Sciatic nerve (tissue), 2 donors: ENCODE measurements at regions of chr5 and their contacts with region 1.

Region 1: DNA sequence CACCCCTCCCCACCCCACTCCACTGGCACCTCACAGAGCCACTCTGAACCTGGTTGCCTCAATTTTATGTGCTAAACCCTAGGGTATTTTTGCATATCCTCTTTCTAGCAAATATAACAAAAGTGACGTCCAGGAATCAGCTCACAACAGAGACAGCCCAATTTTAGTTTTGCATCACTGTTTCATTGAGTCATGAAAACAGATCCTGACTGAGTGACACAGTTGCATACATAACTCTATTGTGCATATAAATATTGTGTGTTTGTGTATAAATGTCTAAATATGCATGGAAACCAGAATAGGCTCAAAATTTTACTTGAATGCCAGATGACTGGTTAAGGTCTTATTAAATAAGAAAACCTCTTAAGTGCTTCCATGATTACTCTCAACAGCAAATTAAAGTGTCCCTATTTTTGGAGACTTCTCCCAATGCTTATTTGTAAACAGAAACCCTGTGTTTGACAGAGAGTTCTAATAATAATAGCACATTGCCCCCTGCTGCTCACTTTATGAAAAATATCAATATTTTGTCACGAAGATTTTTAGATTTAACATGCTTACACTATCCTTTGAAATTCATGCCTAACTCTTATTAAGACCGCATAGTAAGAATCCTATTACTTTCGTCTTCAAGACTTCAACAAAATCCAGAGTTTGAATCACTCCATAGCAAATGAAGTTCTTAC is 75.5 kb upstream of the PRRC1 start:
- DNase-seq: no peak
- ATAC-seq: no peak

Region 2: GRCh38 chr5:127088251-127089010 is 353.5 kb before region 1 on chr5:
- intact Hi-C with region 1: no loop called
- DNase-seq: no peak
- ATAC-seq: peak; percentile 20

Region 3: DNA sequence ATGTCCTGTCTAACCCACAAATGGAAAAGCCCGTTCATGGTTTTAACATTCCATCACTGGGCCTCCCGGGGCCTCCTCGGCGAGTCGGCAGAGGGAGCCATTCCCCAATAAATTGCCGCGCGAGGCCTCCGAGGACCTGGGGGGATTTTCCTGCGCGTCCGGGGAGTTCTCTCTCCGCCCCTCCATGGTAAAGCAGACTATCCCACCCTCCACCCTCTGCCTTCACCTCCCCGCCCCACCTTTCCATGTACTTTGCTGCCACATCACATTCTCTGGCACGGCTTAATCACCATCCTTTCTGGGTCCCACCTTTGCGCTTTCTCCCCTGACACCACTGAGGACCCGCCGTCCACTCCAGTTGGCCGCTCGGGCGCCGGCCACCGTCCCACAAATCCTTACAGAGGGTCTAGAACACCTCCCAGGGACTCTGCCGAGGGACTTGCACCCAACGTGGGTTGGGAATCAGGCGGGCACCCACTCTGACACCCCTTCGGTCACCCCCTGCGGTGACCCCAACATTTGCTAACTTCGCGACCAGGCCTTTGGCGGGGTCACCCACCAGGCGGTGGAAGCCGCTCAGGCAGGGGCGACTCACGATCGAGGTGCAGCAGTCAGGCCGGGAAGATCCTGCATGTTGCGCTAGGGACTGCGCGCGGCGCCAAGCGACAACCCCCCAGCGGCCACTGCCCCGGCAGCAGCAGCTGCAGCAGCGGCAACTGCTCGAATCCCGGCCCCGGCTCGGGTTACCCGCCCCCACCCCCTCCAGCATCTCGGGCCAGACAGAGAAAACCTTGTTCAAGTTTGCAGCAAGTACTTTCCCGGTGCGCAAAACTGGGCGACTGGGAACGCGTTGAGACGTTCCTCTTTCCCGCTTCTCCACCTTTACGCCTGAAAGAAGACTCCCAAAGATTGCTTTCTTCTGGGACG is 151.7 kb before region 1 on chr5 and contains the start of gene MEGF10:
- intact Hi-C with region 1: loop called (anchors 5 kb)
- DNase-seq: peak; percentile 72
- ATAC-seq: peak; percentile 91
- total RNA-seq, gene MEGF10: 8.2 TPM

Region 4: GRCh38 chr5:127492854-127493738 is 51.2 kb after region 1 on chr5:
- intact Hi-C with region 1: no loop called
- DNase-seq: no peak
- ATAC-seq: no peak